HepG2 (cell line): ENCODE measurements at regions of chr1 and their contacts with region 1.

Region 1: DNA sequence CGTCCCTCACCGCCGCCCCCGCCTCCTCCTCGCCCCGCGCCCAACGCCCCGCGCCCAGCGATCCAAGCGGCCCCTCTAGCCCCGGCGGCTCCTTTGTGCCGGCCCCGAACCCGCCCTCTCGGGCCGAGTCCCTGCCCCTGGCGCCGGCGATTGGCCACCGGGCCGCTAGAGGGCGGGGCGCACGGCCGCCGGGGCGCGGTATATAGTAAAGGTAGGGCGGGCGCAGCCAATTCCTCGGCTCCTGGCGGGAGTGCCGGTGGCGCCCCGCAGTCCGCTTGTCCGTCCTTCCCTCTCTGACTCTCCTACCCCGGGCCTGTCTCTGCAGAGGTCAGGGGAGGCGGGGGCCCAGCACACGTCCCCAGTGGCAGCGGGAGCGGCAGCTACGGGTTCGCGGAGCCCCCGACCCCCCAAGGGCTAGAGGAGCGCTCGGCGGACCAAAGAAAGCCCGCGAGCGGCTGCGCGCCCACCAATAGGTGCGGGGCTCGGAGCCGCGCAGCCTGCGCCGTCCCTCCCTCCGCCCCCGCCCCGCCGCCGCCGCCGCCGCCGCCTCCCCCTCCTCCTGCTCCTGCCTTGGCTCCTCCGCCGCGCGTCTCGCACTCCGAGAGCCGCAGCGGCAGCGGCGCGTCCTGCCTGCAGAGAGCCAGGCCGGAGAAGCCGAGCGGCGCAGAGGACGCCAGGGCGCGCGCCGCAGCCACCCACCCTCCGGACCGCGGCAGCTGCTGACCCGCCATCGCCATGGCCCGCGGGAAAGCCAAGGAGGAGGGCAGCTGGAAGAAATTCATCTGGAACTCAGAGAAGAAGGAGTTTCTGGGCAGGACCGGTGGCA is at the start of gene ATP1B1:
- DNase-seq: peak; percentile 79
- ATAC-seq: peak; percentile 79
- H3K4me3 ChIP-seq: peak within 1 kb of the TSS; percentile 95 to 99 (median 96)
- H3K27ac ChIP-seq: peak within 1 kb of the TSS; percentile 95
- H3K4me1 ChIP-seq: peaks cover 65% of the 10 kb centered on the region
- H3K27me3 ChIP-seq: no peaks in the 10 kb centered on the region; a peak in 1 of 5 replicates
- CTCF ChIP-seq: no peak; the same call in 1 of the 2 replicates
- EP300 ChIP-seq: peak in 1 of 2 experiments; percentile 54; a peak in 2 of 4 replicates
- POLR2A ChIP-seq: peak; percentile 98 to 99
- RAD21 ChIP-seq: peak; percentile 37; the same call in 1 of the 2 replicates
- total RNA-seq, gene ATP1B1: 89.8 and 135 TPM in 2 replicates

Region 2: GRCh38 chr1:168689726-168690602 is 416.3 kb before region 1 on chr1:
- CTCF ChIA-PET with region 1: no interaction called
- POLR2A ChIA-PET with region 1: interaction called, 29 read pairs
- in situ Hi-C with region 1: no loop called
- intact Hi-C with region 1: loop called (anchors 5 kb)
- DNase-seq: peak; percentile 86
- ATAC-seq: peak; percentile 78
- H3K4me3 ChIP-seq: peak overlapping the region in 1 of 3 experiments; percentile 23; a peak in 1 of 6 replicates
- H3K27ac ChIP-seq: peak overlapping the region; percentile 91
- H3K4me1 ChIP-seq: peaks cover 97% of the 10 kb centered on the region
- H3K27me3 ChIP-seq: no peaks in the 10 kb centered on the region
- CTCF ChIP-seq: no peak
- EP300 ChIP-seq: peak in 1 of 2 experiments; percentile 73; a peak in 2 of 4 replicates
- POLR2A ChIP-seq: 0 out of 4 replicates have a peak, but pooled peaks of 1 of the 2 experiments have one; percentile 24
- RAD21 ChIP-seq: no peak

Region 3: DNA sequence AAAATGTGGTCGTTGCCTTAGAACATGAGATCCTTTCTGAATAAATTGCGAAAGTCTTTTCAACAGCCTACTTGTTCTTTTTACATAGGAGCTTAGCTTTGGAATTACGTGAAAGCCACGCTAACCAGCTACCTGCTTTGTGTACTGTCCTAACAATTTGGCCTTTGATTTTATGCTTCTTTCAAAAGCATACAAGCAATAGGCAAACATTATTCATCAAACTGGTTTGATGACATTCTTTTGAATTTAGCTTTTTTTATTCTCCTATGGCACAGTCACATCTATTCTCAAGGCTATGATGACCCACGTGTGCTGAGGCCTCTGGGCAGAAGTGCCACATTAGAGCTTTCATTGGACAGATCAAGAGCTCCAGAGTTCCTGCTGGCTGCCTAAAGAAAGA is 199.3 kb before region 1 on chr1:
- CTCF ChIA-PET with region 1: no interaction called
- POLR2A ChIA-PET with region 1: no interaction called
- in situ Hi-C with region 1: no loop called
- intact Hi-C with region 1: loop called (anchors 10 kb)
- DNase-seq: peak; percentile 73
- ATAC-seq: peak; percentile 79
- H3K4me3 ChIP-seq: no peak overlapping the region; a peak in 1 of 6 replicates
- H3K27ac ChIP-seq: peak overlapping the region; percentile 10
- H3K4me1 ChIP-seq: peaks cover 35% of the 10 kb centered on the region
- H3K27me3 ChIP-seq: no peaks in the 10 kb centered on the region; a peak in 1 of 5 replicates
- CTCF ChIP-seq: no peak
- EP300 ChIP-seq: peak in 1 of 2 experiments; percentile 57; a peak in 2 of 4 replicates
- POLR2A ChIP-seq: no peak
- RAD21 ChIP-seq: no peak

Region 4: DNA sequence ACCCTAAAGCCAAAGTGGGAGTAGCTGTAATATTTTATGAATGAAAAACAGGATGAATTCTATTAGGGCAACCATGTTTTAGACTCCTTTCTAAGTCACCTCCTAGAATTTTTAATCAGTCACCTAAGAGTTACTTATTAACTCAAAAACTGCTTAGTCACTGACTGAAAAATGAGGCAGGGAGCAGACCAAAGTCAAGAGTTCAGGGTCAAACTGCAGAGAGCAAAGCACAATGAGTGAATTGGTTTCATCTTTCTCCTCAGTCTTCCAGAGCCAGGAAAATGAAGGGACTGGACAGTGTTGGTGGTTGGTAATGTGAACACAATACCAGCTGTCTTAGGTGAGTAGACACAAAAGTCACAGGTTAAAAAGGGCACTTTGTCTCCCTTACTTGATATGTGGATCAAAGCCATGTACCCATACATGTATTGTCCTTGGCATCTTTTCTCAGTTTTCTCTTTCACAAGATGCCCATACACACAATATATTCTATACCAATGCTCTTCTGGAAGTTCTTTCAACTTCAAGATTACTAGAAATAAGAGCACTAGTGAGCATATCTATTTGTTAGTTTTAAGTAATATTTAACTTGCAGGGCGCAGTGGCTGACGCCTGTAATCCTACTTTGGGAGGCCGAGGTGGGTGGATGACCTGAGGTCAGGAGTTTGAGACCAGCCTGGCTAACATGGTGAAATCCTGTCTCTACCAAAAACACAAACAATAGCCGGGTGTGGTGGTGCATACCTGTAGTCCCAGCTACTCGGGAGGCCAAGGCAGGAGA is 42.4 kb after region 1 on chr1:
- CTCF ChIA-PET with region 1: no interaction called
- POLR2A ChIA-PET with region 1: interaction called, 25 read pairs
- in situ Hi-C with region 1: no loop called
- intact Hi-C with region 1: loop called (anchors 1 kb)
- DNase-seq: peak; percentile 97
- ATAC-seq: peak; percentile 87
- H3K4me3 ChIP-seq: peak overlapping the region in 1 of 3 experiments; percentile 1; a peak in 1 of 6 replicates
- H3K27ac ChIP-seq: peak overlapping the region; percentile 95
- H3K4me1 ChIP-seq: peaks cover 77% of the 10 kb centered on the region
- H3K27me3 ChIP-seq: no peaks in the 10 kb centered on the region
- CTCF ChIP-seq: no peak
- EP300 ChIP-seq: peak; percentile 87 to 97
- POLR2A ChIP-seq: peak in 1 of 2 experiments; percentile 28; a peak in 2 of 4 replicates
- RAD21 ChIP-seq: no peak

Region 5: GRCh38 chr1:169161496-169162194 is 55.3 kb after region 1 on chr1:
- CTCF ChIA-PET with region 1: no interaction called
- POLR2A ChIA-PET with region 1: no interaction called
- in situ Hi-C with region 1: no loop called
- intact Hi-C with region 1: no loop called
- DNase-seq: peak; percentile 27
- ATAC-seq: no peak; the same call in 2 of the 3 replicates
- H3K4me3 ChIP-seq: no peak overlapping the region
- H3K27ac ChIP-seq: no peak overlapping the region
- H3K4me1 ChIP-seq: peaks cover 18% of the 10 kb centered on the region
- H3K27me3 ChIP-seq: no peaks in the 10 kb centered on the region
- CTCF ChIP-seq: peak; percentile 38
- EP300 ChIP-seq: no peak
- POLR2A ChIP-seq: no peak
- RAD21 ChIP-seq: no peak

Region 6: GRCh38 chr1:169485544-169486278 is 379.4 kb after region 1 on chr1 and contains the start of gene SLC19A2:
- CTCF ChIA-PET with region 1: no interaction called
- POLR2A ChIA-PET with region 1: no interaction called
- in situ Hi-C with region 1: no loop called
- intact Hi-C with region 1: loop called (anchors 10 kb)
- DNase-seq: peak; percentile 98
- ATAC-seq: peak; percentile 98
- H3K4me3 ChIP-seq: peak within 1 kb of the TSS; percentile 74 to 87 (median 81)
- H3K27ac ChIP-seq: peak within 1 kb of the TSS; percentile 95
- H3K4me1 ChIP-seq: peaks cover 62% of the 10 kb centered on the region
- H3K27me3 ChIP-seq: no peaks in the 10 kb centered on the region; a peak in 1 of 5 replicates
- CTCF ChIP-seq: peak; percentile 51
- EP300 ChIP-seq: peak; percentile 11 to 43; a peak in 1 of 4 replicates
- POLR2A ChIP-seq: peak; percentile 95 to 96
- RAD21 ChIP-seq: peak; percentile 11; the same call in 1 of the 2 replicates
- total RNA-seq, gene SLC19A2: 19.1 and 30.4 TPM in 2 replicates